ENCODE measurements at regions of chr14 and their contacts with region 1.

Region 1: GRCh38 chr14:54864526-54864925 is 38.1 kb downstream of the GCH1 start:
- DNase-seq: no peak
- ATAC-seq: peak in 3 of 4 donors; percentile 60 to 80 (median 68)
- H3K4me3 ChIP-seq: no peak overlapping the region
- H3K27ac ChIP-seq: peak overlapping the region in 4 of 12 donors; percentile 11 to 49 (median 31)
- H3K4me1 ChIP-seq: peaks cover 0 to 36% (median 5%) of the 10 kb centered on the region in 12 donors
- H3K27me3 ChIP-seq: no peaks in the 10 kb centered on the region
- CTCF ChIP-seq: no peak
- POLR2A ChIP-seq: no peak

Region 2: GRCh38 chr14:54893151-54893760 is 28.7 kb after region 1 on chr14:
- intact Hi-C with region 1: loop called in 1 of 10 experiments (anchors 5 kb)
- DNase-seq: no peak
- ATAC-seq: peak in 2 of 4 donors; percentile 45 to 46
- H3K4me3 ChIP-seq: no peak overlapping the region
- H3K27ac ChIP-seq: no peak overlapping the region
- H3K4me1 ChIP-seq: peaks cover 0 to 26% (median 0%) of the 10 kb centered on the region in 12 donors
- H3K27me3 ChIP-seq: no peaks in the 10 kb centered on the region
- CTCF ChIP-seq: peak; percentile 65 to 84 (median 77)
- POLR2A ChIP-seq: no peak

Measured in heart left ventricle (tissue), 16 donors.